Activated CD8-positive, alpha-beta T cell treated with anti-CD3 and anti-CD28 coated beads, Interleukin-2, amount 10 ng/mL, durations not matched to agents 7 days and 5 days (primary cell): ENCODE measurements at regions of chr9 and their contacts with region 1.

Region 1: DNA sequence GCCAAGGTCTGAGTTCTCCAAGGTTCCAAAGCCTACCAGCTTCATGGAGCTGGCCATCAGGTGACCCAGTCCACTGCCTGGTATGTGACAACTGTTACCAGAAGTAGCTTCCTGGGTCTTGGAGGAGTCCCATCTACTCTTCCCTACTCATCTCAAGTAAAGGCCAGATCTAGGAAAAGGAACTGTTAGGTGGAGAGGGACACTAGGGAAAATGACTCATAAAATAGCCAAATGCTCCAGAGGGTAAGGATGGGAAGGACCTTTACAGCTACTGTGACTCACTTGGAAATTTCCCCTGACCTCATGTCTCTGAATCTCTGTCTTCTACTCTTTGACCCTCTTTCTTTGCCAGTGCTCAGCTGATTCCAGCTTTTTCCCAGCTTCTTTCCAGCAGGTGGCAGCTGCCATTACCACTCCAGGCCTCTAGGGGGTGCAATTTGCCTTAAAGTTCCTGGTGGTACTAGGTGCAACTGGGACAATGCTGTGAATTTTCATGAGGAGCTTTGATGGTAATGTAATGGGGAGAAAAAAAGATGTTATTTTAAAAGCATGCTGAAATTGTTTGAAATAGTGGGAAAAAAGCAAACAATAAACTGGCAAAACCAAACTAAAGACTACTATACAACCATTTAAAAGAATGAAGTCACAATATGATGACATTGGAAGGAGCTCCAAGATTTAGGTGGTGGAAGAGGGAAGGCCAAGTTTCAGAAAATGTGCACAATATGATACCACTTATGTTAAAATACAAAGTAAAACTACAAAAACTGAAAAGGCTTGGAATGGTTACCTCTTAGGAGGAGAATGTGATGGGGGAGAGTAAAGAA is 27.1 kb upstream of the MYORG start:
- DNase-seq: peak; percentile 67
- ATAC-seq: no peak
- H3K4me3 Mint-ChIP-seq: no peak overlapping the region
- H3K27ac Mint-ChIP-seq: no peak overlapping the region
- H3K4me1 Mint-ChIP-seq: no peaks in the 10 kb centered on the region
- H3K27me3 Mint-ChIP-seq: no peaks in the 10 kb centered on the region

Region 2: GRCh38 chr9:34332076-34332964 is 71.4 kb before region 1 on chr9:
- CTCF ChIA-PET with region 1: interaction called, 24 read pairs
- POLR2A ChIA-PET with region 1: no interaction called
- DNase-seq: peak; percentile 26
- ATAC-seq: no peak
- H3K4me3 Mint-ChIP-seq: no peak overlapping the region
- H3K27ac Mint-ChIP-seq: no peak overlapping the region
- H3K4me1 Mint-ChIP-seq: peaks cover 20% of the 10 kb centered on the region
- H3K27me3 Mint-ChIP-seq: no peaks in the 10 kb centered on the region

Region 3: GRCh38 chr9:34386656-34387055 is 17.1 kb before region 1 on chr9:
- CTCF ChIA-PET with region 1: interaction called, 10 read pairs
- POLR2A ChIA-PET with region 1: no interaction called
- DNase-seq: no peak
- ATAC-seq: no peak
- H3K4me3 Mint-ChIP-seq: no peak overlapping the region
- H3K27ac Mint-ChIP-seq: no peak overlapping the region
- H3K4me1 Mint-ChIP-seq: peaks cover under 1% of the 10 kb centered on the region
- H3K27me3 Mint-ChIP-seq: peaks cover 12% of the 10 kb centered on the region

Region 4: DNA sequence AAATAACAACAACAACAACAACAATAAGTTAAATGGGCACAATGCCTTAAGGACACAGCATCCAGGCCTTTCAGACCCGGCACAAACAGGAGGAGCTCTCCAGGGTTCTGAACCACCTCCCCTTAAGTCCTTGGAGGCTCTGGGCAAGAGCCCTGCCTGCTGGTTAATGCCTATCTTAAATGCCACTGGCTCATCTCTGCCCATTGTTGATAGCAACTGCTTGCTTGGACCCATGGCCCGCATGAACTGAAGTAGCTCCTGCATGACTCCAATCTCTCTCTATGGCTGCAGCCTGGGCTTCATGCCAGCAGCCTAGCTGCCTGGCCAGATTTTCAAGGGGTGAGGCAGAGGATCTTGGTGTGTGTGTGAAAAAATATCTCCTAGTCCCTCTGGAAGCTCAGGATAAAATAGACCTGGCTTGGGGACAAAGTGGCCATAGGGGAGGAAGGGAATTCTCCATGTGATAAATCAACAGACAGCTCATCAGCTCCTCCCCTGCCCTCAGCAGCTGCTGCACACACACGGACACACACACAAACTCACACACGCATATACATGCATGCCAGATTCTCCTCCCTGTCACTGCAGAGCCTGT is 27.2 kb after region 1 on chr9:
- CTCF ChIA-PET with region 1: interaction called, 13 read pairs
- POLR2A ChIA-PET with region 1: no interaction called
- DNase-seq: peak; percentile 57
- ATAC-seq: peak; percentile 67
- H3K4me3 Mint-ChIP-seq: no peak overlapping the region
- H3K27ac Mint-ChIP-seq: no peak overlapping the region
- H3K4me1 Mint-ChIP-seq: no peaks in the 10 kb centered on the region
- H3K27me3 Mint-ChIP-seq: no peaks in the 10 kb centered on the region

Region 5: GRCh38 chr9:34500623-34501267 is 97.0 kb after region 1 on chr9:
- CTCF ChIA-PET with region 1: interaction called, 43 read pairs
- POLR2A ChIA-PET with region 1: no interaction called
- DNase-seq: peak; percentile 80
- ATAC-seq: peak; percentile 69
- H3K4me3 Mint-ChIP-seq: no peak overlapping the region
- H3K27ac Mint-ChIP-seq: no peak overlapping the region
- H3K4me1 Mint-ChIP-seq: no peaks in the 10 kb centered on the region
- H3K27me3 Mint-ChIP-seq: peaks cover 9% of the 10 kb centered on the region

Region 6: DNA sequence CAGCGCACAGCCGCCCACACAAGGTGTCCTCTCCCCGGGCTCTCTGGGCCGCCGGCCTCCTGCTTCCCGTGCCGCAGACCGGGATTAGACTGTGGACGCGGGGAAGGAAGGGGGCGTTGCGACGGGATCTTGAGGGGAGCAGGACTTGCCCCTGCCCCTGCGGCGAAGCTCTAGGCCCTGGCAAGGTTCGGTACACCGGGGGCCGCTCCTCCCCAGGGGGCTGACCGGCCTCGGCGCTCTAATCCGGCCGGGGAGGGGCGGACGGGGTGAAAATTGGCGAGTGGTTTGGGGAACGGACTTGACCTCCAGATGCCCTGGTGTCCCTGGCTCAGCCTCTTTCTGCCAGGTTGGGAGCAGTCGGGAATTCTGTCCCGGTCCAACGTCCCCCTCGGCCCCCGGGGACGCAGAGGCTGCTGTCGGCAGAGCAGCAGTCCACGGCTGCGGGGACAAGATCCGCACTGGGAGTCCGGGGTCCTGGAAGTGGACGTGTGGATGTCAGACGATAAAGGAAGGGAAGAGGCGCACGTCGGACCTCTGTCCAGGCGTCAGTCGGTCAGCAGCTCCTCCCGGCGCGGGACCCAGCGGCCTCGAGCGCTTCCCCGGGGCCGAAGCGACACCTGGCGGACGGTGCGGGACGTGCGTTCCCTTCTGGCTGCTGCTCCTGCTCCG is 187.6 kb after region 1 on chr9:
- CTCF ChIA-PET with region 1: interaction called, 13 read pairs
- POLR2A ChIA-PET with region 1: no interaction called
- DNase-seq: peak; percentile 82
- ATAC-seq: peak; percentile 86
- H3K4me3 Mint-ChIP-seq: peak overlapping the region; percentile 39
- H3K27ac Mint-ChIP-seq: no peak overlapping the region
- H3K4me1 Mint-ChIP-seq: peaks cover 25% of the 10 kb centered on the region
- H3K27me3 Mint-ChIP-seq: peaks cover 74% of the 10 kb centered on the region

Region 7: GRCh38 chr9:34603610-34604231 is 200.0 kb after region 1 on chr9:
- CTCF ChIA-PET with region 1: interaction called, 14 read pairs
- POLR2A ChIA-PET with region 1: no interaction called
- DNase-seq: peak; percentile 86
- ATAC-seq: peak; percentile 95
- H3K4me3 Mint-ChIP-seq: no peak overlapping the region
- H3K27ac Mint-ChIP-seq: no peak overlapping the region
- H3K4me1 Mint-ChIP-seq: no peaks in the 10 kb centered on the region
- H3K27me3 Mint-ChIP-seq: peaks cover 8% of the 10 kb centered on the region